Kidney (tissue), 22 donors: ENCODE measurements at regions of chr6 and their contacts with region 1.

Region 1: GRCh38 chr6:135535989-135536414 is 38.5 kb upstream of the AHI1 start:
- DNase-seq: peak in 4 of 5 donors; percentile 25 to 87 (median 54)
- H3K4me3 ChIP-seq: peak overlapping the region in 1 of 3 donors; percentile 47
- H3K27ac ChIP-seq: no peak overlapping the region
- H3K4me1 ChIP-seq: peaks cover 0 to 5% (median 0%) of the 10 kb centered on the region in 3 donors
- H3K27me3 ChIP-seq: no peaks in the 10 kb centered on the region
- CTCF ChIP-seq: peak; percentile 60

Region 2: DNA sequence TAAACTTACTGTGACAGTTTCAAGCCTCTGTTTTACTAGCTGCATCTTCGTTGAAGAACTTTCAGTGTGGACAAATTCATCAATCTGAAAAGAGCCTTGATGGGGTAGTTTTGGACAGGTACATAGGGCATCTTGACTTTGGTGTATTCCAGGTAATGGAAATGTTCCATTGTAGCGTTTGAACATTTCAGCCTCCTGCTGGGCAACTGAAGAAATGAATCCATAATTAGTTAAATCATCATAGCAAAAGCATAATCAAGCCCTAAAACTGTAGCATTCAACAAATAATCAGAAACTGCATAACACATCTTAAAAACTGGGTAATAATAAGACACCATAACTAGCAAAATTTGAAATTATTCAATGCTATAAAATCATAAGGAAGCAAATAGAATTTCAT is 124.7 kb before region 1 on chr6:
- intact Hi-C with region 1: no loop called
- DNase-seq: no peak
- H3K4me3 ChIP-seq: no peak overlapping the region
- H3K27ac ChIP-seq: no peak overlapping the region
- H3K4me1 ChIP-seq: no peaks in the 10 kb centered on the region
- H3K27me3 ChIP-seq: no peaks in the 10 kb centered on the region
- CTCF ChIP-seq: no peak

Region 3: GRCh38 chr6:135497412-135498269 is 38.4 kb before region 1 on chr6 and contains the start of gene AHI1:
- intact Hi-C with region 1: no loop called
- DNase-seq: peak; percentile 96 to 98 (median 97)
- H3K4me3 ChIP-seq: peak within 1 kb of the TSS; percentile 88 to 95 (median 90)
- H3K27ac ChIP-seq: peak within 1 kb of the TSS; percentile 95 to 99
- H3K4me1 ChIP-seq: peaks cover 0 to 4% (median 0%) of the 10 kb centered on the region in 3 donors
- H3K27me3 ChIP-seq: no peaks in the 10 kb centered on the region
- CTCF ChIP-seq: peak; percentile 33
- total RNA-seq, gene AHI1: 28.5 TPM

Region 4: DNA sequence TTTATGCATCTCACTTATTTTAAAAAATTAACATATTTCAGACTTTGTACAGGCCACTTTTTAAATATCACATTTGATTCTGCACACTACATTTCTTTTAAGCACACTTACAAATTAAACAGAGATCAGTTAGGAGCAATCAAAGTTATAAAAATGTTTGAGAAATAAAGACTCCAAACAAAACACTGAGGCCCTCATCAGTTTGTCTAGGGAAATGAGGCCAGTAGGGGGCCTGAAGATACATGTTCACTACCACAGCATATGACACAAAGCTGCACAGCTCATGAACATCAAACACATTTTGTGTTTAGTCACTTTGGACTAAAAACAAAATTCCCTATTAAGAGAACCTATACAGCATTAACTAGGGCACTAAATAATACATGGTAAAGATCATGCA is 496.0 kb after region 1 on chr6:
- intact Hi-C with region 1: loop called (anchors 5 kb)
- DNase-seq: peak in 1 of 5 donors; percentile 40
- H3K4me3 ChIP-seq: no peak overlapping the region
- H3K27ac ChIP-seq: no peak overlapping the region
- H3K4me1 ChIP-seq: peaks cover 0 to 2% (median 0%) of the 10 kb centered on the region in 3 donors
- H3K27me3 ChIP-seq: no peaks in the 10 kb centered on the region
- CTCF ChIP-seq: peak; percentile 38

Region 5: GRCh38 chr6:136210398-136211165 is 674.6 kb after region 1 on chr6:
- intact Hi-C with region 1: loop called (anchors 10 kb)
- DNase-seq: no peak
- H3K4me3 ChIP-seq: no peak overlapping the region
- H3K27ac ChIP-seq: no peak overlapping the region
- H3K4me1 ChIP-seq: no peaks in the 10 kb centered on the region
- H3K27me3 ChIP-seq: no peaks in the 10 kb centered on the region
- CTCF ChIP-seq: no peak